HepG2 (cell line): ENCODE measurements at regions of chr19 and their contacts with region 1.

Region 1: DNA sequence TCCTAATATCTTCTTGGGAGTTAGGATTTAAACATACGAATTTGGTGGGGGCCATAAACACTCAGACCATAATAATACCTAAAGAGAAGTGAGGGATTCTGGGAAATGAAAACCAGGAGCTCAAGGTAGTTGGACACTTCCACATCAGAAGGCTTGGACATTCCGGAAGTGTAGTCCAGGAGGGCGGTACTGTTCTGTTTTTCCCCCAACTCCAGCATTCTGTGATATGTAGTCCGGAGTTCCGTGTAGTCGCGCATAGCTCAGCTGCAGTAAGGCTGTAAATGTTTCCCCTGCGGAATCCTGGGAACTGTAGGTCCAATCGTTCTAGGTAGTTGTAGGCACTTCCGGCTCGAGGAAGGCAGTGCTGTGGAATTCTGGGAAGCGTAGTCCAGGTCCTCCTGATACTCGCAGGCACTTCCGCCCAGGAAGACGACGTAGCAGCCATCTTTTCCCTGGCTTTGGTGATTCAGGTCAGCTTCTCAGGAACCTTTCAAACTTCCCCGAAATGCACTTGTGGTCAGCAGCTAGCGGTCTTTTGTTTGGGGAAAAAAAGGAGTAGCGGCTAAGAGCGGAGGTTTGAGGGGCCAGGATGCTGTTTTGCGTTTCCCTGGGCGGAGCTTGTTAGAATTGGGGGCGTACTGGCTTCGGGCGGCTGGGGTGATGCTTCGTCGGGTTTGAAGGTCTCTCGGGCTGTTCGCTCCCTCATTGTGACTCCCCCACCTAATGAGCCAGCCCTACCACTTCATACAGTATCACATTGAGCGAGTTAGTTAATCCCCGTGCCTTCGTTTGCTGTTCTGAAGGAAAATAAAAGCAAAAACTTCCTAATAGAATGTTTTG is at the start of gene ZNF226:
- DNase-seq: peak; percentile 99
- ATAC-seq: peak; percentile 99
- H3K4me3 ChIP-seq: peak within 1 kb of the TSS; percentile 79 to 96 (median 80)
- H3K27ac ChIP-seq: peak within 1 kb of the TSS; percentile 69
- H3K4me1 ChIP-seq: peaks cover 21% of the 10 kb centered on the region
- H3K27me3 ChIP-seq: no peaks in the 10 kb centered on the region
- CTCF ChIP-seq: no peak
- EP300 ChIP-seq: no peak
- POLR2A ChIP-seq: peak; percentile 75 to 85
- RAD21 ChIP-seq: no peak
- total RNA-seq, gene ZNF226: 16.0 and 19.2 TPM in 2 replicates

Region 2: DNA sequence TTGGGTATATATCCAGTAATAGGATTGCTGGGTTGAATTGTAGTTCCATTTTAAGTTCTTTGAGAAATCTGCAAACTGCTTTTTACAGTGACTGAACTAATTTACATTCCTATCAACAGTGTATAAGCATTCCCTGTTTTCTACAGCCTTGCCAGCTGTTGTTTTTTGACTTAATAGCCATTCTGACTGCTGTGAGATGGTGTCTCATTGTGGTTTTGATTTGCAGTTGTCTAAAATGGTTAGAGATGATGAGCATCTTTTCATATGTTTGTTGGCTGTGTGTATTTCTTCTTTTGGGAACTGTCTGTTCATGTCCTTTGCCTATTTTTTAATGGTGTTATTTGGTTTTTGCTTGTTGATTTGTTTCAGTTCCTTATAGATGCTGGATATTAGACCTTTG is 143.7 kb before region 1 on chr19:
- CTCF ChIA-PET with region 1: no interaction called
- POLR2A ChIA-PET with region 1: no interaction called
- in situ Hi-C with region 1: no loop called
- intact Hi-C with region 1: no loop called
- DNase-seq: no peak
- ATAC-seq: no peak
- H3K4me3 ChIP-seq: no peak overlapping the region
- H3K27ac ChIP-seq: no peak overlapping the region
- H3K4me1 ChIP-seq: peaks cover 10% of the 10 kb centered on the region; the same call in 1 of the 2 replicates
- H3K27me3 ChIP-seq: no peaks in the 10 kb centered on the region; a peak in 1 of 5 replicates
- CTCF ChIP-seq: no peak
- EP300 ChIP-seq: no peak
- POLR2A ChIP-seq: no peak
- RAD21 ChIP-seq: no peak

Region 3: GRCh38 chr19:44051654-44052402 is 113.1 kb before region 1 on chr19 and contains the start of gene ZNF223:
- CTCF ChIA-PET with region 1: no interaction called
- POLR2A ChIA-PET with region 1: interaction called, 14 read pairs
- in situ Hi-C with region 1: no loop called
- intact Hi-C with region 1: no loop called
- DNase-seq: peak; percentile 94
- ATAC-seq: peak; percentile 99
- H3K4me3 ChIP-seq: peak within 1 kb of the TSS; percentile 73 to 78 (median 78)
- H3K27ac ChIP-seq: peak within 1 kb of the TSS; percentile 89
- H3K4me1 ChIP-seq: peaks cover 32% of the 10 kb centered on the region
- H3K27me3 ChIP-seq: no peaks in the 10 kb centered on the region; a peak in 1 of 5 replicates
- CTCF ChIP-seq: no peak
- EP300 ChIP-seq: peak in 1 of 2 experiments; percentile 30; a peak in 1 of 4 replicates
- POLR2A ChIP-seq: peak; percentile 62 to 78; a peak in 3 of 4 replicates
- RAD21 ChIP-seq: no peak
- total RNA-seq, gene ZNF223: 4.8 and 5.6 TPM in 2 replicates

Region 4: DNA sequence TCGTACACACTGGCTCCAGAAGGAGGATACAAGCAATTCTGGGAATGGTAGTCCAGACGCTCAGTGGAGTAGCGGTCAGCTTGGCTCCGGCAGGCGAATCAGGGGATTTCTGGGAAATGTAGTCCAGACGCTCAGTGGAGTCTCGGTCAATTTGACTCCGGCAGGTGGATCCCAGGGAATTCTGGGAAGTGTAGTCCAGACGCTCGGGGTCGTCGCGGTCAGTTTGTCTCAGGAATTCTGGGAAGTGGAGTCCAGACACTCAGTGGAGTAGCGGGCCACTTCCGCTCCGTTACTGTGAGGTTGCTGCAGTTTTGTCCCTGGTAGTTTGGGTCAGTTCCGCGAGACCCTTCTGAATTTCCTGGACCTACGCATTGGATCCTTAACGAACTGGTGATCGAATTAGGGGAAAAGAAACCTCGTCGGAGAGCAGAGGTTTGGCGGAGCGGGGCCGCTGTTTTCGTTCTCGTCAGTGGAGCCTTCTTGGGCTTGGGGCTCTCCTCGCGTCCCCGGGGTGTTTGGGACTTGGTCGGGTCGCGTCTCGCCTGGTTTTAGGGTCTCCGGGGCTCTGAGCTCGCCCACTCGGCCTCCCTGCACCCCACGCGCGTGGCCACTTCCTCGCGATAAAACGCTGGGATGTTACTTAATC is 51.6 kb before region 1 on chr19 and contains the start of gene ZNF225:
- CTCF ChIA-PET with region 1: no interaction called
- POLR2A ChIA-PET with region 1: interaction called, 19 read pairs
- in situ Hi-C with region 1: no loop called
- intact Hi-C with region 1: no loop called
- DNase-seq: peak; percentile 97
- ATAC-seq: peak; percentile 99
- H3K4me3 ChIP-seq: peak within 1 kb of the TSS; percentile 82 to 92 (median 82)
- H3K27ac ChIP-seq: peak within 1 kb of the TSS; percentile 51
- H3K4me1 ChIP-seq: peaks cover 14% of the 10 kb centered on the region
- H3K27me3 ChIP-seq: no peaks in the 10 kb centered on the region; a peak in 1 of 5 replicates
- CTCF ChIP-seq: no peak
- EP300 ChIP-seq: peak in 1 of 2 experiments; percentile 27; a peak in 1 of 4 replicates
- POLR2A ChIP-seq: peak; percentile 56 to 71
- RAD21 ChIP-seq: 0 out of 2 replicates have a peak, but pooled peaks have one; percentile 6
- total RNA-seq, gene ZNF225: 3.3 and 4.6 TPM in 2 replicates

Region 5: DNA sequence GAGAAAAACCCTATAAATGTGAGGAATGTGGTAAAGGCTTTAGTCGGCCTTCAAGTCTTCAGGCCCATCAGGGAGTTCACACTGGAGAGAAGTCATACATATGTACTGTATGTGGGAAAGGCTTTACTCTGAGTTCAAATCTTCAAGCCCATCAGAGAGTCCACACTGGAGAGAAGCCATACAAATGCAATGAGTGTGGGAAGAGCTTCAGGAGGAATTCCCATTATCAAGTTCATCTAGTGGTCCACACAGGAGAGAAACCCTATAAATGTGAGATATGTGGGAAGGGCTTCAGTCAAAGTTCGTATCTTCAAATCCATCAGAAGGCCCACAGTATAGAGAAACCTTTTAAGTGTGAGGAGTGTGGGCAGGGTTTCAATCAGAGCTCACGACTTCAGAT is 11.7 kb after region 1 on chr19:
- CTCF ChIA-PET with region 1: no interaction called
- POLR2A ChIA-PET with region 1: interaction called, 11 read pairs
- in situ Hi-C with region 1: no loop called
- intact Hi-C with region 1: no loop called
- DNase-seq: no peak
- ATAC-seq: no peak
- H3K4me3 ChIP-seq: no peak overlapping the region
- H3K27ac ChIP-seq: no peak overlapping the region
- H3K4me1 ChIP-seq: no peaks in the 10 kb centered on the region
- H3K27me3 ChIP-seq: no peaks in the 10 kb centered on the region
- CTCF ChIP-seq: no peak
- EP300 ChIP-seq: no peak
- POLR2A ChIP-seq: no peak
- RAD21 ChIP-seq: no peak

Region 6: GRCh38 chr19:44212250-44212865 is 47.5 kb after region 1 on chr19 and contains the start of gene ZNF227:
- CTCF ChIA-PET with region 1: no interaction called
- POLR2A ChIA-PET with region 1: interaction called, 36 read pairs
- in situ Hi-C with region 1: no loop called
- intact Hi-C with region 1: no loop called
- DNase-seq: peak; percentile 93
- ATAC-seq: peak; percentile 99
- H3K4me3 ChIP-seq: peak within 1 kb of the TSS; percentile 90 to 100 (median 91)
- H3K27ac ChIP-seq: peak within 1 kb of the TSS; percentile 58
- H3K4me1 ChIP-seq: peaks cover 11% of the 10 kb centered on the region
- H3K27me3 ChIP-seq: peaks cover 0 to 3% of the 10 kb centered on the region in 2 experiments; a peak in 1 of 5 replicates
- CTCF ChIP-seq: no peak
- EP300 ChIP-seq: no peak
- POLR2A ChIP-seq: peak; percentile 51 to 76
- RAD21 ChIP-seq: no peak
- total RNA-seq, gene ZNF227: 16.8 and 23.2 TPM in 2 replicates